MCF 10A (cell line): ENCODE measurements at regions of chr15 and their contacts with region 1.

Region 1: DNA sequence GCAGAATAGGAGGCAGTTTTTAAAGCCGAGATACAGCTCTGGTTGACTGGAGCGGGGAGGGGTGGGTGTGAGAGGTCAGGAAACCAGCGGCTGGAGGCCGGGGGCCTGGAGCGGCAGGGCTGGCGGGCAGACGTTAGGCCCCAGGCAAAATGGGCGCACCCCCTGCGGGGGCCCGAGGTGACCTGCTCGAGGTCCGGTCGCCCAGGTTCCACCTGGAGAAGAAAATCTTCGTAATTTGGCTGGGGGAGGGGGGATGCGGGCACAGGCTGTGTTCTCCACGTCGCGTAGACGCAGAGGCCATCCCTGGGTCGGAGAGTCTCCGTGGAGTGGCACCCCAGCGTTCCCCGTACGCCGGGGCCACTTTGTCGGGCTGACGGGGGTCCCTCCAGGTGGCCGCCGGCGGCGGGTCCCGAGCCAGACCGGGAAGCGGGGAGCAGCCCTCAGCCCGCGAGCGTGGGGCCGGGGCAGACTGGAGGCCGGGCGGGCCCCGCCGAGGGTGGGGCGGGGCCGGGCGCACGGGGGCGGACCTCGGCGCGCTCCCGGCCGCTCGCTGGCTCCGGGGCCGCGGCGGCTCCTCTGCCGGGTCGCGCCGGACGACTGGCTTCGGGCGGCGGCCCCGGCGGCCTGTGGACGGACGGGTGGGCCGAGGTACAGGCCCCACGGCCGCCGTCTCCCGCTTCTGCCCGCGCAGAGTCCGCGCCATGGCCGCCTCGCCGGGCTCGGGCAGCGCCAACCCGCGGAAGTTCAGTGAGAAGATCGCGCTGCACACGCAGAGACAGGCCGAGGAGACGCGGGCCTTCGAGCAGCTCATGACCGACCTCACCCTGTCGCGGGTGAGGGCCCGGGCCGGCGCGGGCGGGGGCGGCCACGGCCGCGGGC is at the start of gene CRTC3:
- DNase-seq: peak; percentile 45
- H3K4me3 Mint-ChIP-seq: peak within 1 kb of the TSS; percentile 86
- H3K27ac Mint-ChIP-seq: peak within 1 kb of the TSS; percentile 40
- H3K4me1 Mint-ChIP-seq: peaks cover 32% of the 10 kb centered on the region
- H3K27me3 Mint-ChIP-seq: no peaks in the 10 kb centered on the region
- CTCF ChIP-seq: no peak
- total RNA-seq, gene CRTC3: 22.6 and 25.9 TPM in 2 replicates

Region 2: GRCh38 chr15:90560229-90560776 is 30.7 kb after region 1 on chr15:
- CTCF ChIA-PET with region 1: no interaction called
- POLR2A ChIA-PET with region 1: interaction called, 35 read pairs
- intact Hi-C with region 1: no loop called
- DNase-seq: peak; percentile 93
- H3K4me3 Mint-ChIP-seq: peak overlapping the region; percentile 38
- H3K27ac Mint-ChIP-seq: peak overlapping the region; percentile 75
- H3K4me1 Mint-ChIP-seq: peaks cover 48% of the 10 kb centered on the region
- H3K27me3 Mint-ChIP-seq: no peaks in the 10 kb centered on the region
- CTCF ChIP-seq: no peak

Region 3: GRCh38 chr15:90594301-90594701 is 64.7 kb after region 1 on chr15:
- CTCF ChIA-PET with region 1: interaction called, 3 read pairs
- POLR2A ChIA-PET with region 1: interaction called, 5 read pairs
- intact Hi-C with region 1: loop called (anchors 5 kb)
- DNase-seq: peak; percentile 89
- H3K4me3 Mint-ChIP-seq: peak overlapping the region; percentile 52
- H3K27ac Mint-ChIP-seq: peak overlapping the region; percentile 57
- H3K4me1 Mint-ChIP-seq: peaks cover 17% of the 10 kb centered on the region
- H3K27me3 Mint-ChIP-seq: no peaks in the 10 kb centered on the region
- CTCF ChIP-seq: no peak

Region 4: GRCh38 chr15:90762109-90762508 is 232.5 kb after region 1 on chr15:
- CTCF ChIA-PET with region 1: no interaction called
- POLR2A ChIA-PET with region 1: no interaction called
- intact Hi-C with region 1: no loop called
- DNase-seq: peak; percentile 78
- H3K4me3 Mint-ChIP-seq: no peak overlapping the region
- H3K27ac Mint-ChIP-seq: no peak overlapping the region
- H3K4me1 Mint-ChIP-seq: peaks cover 8% of the 10 kb centered on the region
- H3K27me3 Mint-ChIP-seq: no peaks in the 10 kb centered on the region
- CTCF ChIP-seq: no peak